ENCODE measurements at regions of chr11 and their contacts with region 1.

Region 1: GRCh38 chr11:27158722-27159679 is 118.4 kb downstream of the BBOX1 start:
- DNase-seq: peak; percentile 46
- H3K4me3 ChIP-seq: no peak overlapping the region
- CTCF ChIP-seq: peak; percentile 64

Region 2: GRCh38 chr11:26286472-26287066 is 872.4 kb before region 1 on chr11:
- CTCF ChIA-PET with region 1: interaction called, 20 read pairs
- POLR2A ChIA-PET with region 1: no interaction called
- DNase-seq: no peak
- H3K4me3 ChIP-seq: no peak overlapping the region
- CTCF ChIP-seq: peak; percentile 50

Region 3: DNA sequence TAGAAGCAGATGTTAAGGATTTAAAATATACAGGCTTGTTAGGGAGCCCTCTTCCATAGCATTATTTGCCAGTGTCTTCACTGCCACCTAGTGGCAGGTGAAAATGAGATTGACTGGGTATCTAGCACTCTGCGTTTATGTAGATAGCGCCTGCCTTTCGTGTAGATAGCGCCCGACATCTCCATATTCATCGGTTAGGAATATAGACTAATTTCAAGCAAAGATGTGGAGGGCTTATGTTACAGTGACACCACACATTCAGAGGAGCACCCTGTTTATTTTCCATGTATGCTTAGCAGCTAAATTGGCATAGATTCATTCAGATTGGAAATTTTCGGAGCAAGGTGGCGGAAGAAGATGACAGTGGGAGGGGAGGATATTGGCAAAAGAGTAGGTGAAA is 509.1 kb before region 1 on chr11:
- CTCF ChIA-PET with region 1: interaction called, 20 read pairs
- POLR2A ChIA-PET with region 1: no interaction called
- DNase-seq: peak; percentile 29
- H3K4me3 ChIP-seq: no peak overlapping the region
- CTCF ChIP-seq: peak; percentile 68

Region 4: GRCh38 chr11:26753723-26754504 is 405.1 kb before region 1 on chr11:
- CTCF ChIA-PET with region 1: interaction called, 70 read pairs
- POLR2A ChIA-PET with region 1: no interaction called
- DNase-seq: peak; percentile 31
- H3K4me3 ChIP-seq: no peak overlapping the region
- CTCF ChIP-seq: peak; percentile 66

Region 5: GRCh38 chr11:27124514-27125264 is 34.3 kb before region 1 on chr11:
- CTCF ChIA-PET with region 1: interaction called, 15 read pairs
- POLR2A ChIA-PET with region 1: no interaction called
- DNase-seq: no peak
- H3K4me3 ChIP-seq: no peak overlapping the region
- CTCF ChIP-seq: no peak

Region 6: GRCh38 chr11:27183672-27184457 is 24.9 kb after region 1 on chr11:
- CTCF ChIA-PET with region 1: interaction called, 10 read pairs
- POLR2A ChIA-PET with region 1: no interaction called
- DNase-seq: peak; percentile 38
- H3K4me3 ChIP-seq: no peak overlapping the region
- CTCF ChIP-seq: peak; percentile 47